Activated CD8-positive, alpha-beta T cell treated with anti-CD3 and anti-CD28 coated beads, Interleukin-2, amount 10 ng/mL, durations not matched to agents 7 days and 5 days (primary cell): ENCODE measurements at regions of chr3 and their contacts with region 1.

Region 1: DNA sequence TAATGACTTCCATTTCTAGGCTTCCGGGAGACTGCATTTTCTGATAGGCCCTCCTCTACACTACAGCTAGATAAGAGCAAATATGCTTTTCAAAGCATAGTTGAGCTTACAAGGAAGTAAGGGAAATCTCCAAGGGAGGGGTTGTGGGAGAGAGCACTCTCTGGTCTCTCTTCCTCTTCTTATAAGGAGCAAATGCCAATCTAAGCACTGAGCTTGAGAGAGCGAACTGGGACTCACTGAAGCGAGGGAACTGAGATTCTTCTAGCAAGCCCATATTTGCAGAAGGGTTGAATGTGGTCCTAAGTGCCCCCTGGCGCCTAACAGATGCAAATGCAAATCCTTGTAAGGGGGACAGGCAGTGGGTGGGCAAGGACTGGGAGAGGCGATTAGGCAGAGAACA is 164.8 kb downstream of the ERC2 start:
- DNase-seq: peak; percentile 33
- ATAC-seq: peak; percentile 44
- H3K4me3 Mint-ChIP-seq: no peak overlapping the region
- H3K27ac Mint-ChIP-seq: no peak overlapping the region
- H3K4me1 Mint-ChIP-seq: no peaks in the 10 kb centered on the region
- H3K27me3 Mint-ChIP-seq: peaks cover 3% of the 10 kb centered on the region

Region 2: DNA sequence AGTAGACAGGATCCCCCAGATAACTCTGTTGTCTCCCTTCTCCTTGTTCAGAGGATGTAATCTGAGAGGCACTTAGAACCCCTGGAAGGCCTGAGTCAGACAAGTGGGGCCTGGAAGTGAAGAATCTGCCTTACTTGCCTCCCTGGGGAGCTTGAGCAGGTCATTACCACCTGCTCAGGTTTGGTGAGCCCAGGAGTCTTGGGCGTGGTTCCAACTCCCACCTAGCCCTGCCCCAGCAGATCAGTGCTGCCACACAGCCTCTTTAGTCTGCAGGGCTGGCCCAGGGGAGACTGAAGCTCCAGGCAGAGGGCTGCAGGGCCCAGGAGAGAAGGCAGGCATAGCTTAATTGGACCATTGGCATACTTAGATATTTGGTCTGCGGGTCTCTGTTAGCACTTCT is 65.2 kb before region 1 on chr3:
- CTCF ChIA-PET with region 1: no interaction called
- POLR2A ChIA-PET with region 1: no interaction called
- DNase-seq: no peak
- ATAC-seq: no peak
- H3K4me3 Mint-ChIP-seq: no peak overlapping the region
- H3K27ac Mint-ChIP-seq: no peak overlapping the region
- H3K4me1 Mint-ChIP-seq: no peaks in the 10 kb centered on the region
- H3K27me3 Mint-ChIP-seq: peaks cover 9% of the 10 kb centered on the region

Region 3: GRCh38 chr3:56291244-56291680 is 12.2 kb before region 1 on chr3:
- CTCF ChIA-PET with region 1: interaction called, 22 read pairs
- POLR2A ChIA-PET with region 1: no interaction called
- DNase-seq: no peak
- ATAC-seq: peak; percentile 71
- H3K4me3 Mint-ChIP-seq: no peak overlapping the region
- H3K27ac Mint-ChIP-seq: no peak overlapping the region
- H3K4me1 Mint-ChIP-seq: peaks cover 23% of the 10 kb centered on the region
- H3K27me3 Mint-ChIP-seq: no peaks in the 10 kb centered on the region